ENCODE measurements at regions of chr18 and their contacts with region 1.

Region 1: DNA sequence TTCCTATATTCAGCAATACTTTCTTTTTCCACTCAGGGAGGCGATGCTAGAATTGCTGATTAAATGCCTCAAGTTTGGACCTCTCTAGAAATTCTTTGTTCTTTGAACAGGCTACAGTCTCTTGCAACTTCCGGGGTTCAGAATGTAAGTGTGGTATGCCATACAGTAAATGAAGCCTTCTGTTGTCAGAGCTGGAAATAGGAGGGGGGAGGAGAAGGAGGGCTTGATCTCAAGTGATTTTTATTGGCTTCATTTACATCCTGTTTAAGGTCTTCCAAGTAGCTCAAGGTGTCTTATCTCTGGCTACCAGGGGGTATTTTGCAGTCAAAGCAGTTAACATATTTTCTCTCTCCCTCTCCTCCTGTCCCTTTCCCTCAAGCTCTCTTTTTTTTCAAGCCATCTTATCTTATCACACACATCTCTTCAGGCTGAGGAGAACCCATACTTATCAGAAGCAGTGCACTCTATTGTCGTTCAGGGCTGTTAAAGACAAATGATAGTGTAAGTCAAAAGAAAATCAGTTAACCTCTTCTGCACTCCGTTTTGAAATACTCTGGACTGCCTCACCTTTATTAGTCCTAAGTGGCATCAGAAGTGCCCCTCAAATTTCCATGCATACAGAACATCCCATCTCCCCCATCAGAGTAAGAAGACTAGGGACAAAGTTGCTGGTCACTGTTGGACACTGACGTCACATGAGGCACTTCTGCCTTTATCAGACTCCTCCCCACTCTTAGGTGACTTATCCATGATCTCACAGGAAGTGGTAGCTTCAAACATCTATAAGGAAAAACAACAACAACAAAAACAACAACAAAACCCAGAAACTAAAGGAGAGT is 112.2 kb downstream of the ZNF521 start:
- DNase-seq: no peak
- ATAC-seq: peak; percentile 39
- H3K4me3 Mint-ChIP-seq: no peak overlapping the region
- H3K27ac Mint-ChIP-seq: no peak overlapping the region
- H3K4me1 Mint-ChIP-seq: no peaks in the 10 kb centered on the region
- H3K27me3 Mint-ChIP-seq: no peaks in the 10 kb centered on the region

Region 2: DNA sequence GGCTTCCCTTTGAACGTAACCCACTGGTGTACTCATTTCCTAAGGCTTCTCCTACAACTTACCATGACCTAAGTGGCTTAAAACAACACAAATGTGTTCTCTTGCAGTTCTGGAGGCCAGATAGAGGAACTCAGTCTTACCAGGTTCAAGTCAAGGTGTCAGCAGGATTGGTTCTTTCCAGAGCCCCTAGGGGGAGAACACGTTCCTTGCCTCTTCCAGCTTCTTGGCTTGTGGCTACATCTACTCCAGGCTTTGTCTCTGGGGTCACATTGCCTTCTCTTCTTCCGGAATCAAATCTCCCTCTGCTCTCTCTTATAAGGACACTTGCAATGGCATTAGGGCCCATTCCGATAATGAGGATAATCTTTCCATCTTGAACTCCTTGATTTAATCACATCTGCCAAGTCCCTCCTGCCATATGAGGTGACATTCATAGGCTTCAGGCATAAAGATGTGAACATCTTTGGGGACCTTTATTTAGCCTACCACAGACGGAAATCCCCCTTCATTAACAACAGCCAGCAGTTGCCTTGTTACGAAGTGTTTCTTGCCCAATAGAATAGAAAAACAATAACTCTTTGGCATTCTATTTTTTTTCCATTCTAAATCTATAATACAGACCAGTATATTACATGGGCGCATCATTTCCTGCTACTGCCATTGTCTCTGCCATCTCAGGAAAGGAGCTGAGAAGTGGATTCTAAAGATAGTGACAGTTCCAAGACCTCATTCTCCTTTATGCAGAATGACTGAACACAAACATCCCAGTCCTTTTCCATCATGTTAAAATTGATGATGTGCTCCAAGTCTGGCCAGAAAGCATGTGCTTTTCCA is 249.8 kb before region 1 on chr18:
- CTCF ChIA-PET with region 1: no interaction called
- POLR2A ChIA-PET with region 1: no interaction called
- intact Hi-C with region 1: no loop called
- DNase-seq: no peak
- ATAC-seq: no peak
- H3K4me3 Mint-ChIP-seq: no peak overlapping the region
- H3K27ac Mint-ChIP-seq: no peak overlapping the region
- H3K4me1 Mint-ChIP-seq: no peaks in the 10 kb centered on the region
- H3K27me3 Mint-ChIP-seq: peaks cover 2% of the 10 kb centered on the region

Region 3: DNA sequence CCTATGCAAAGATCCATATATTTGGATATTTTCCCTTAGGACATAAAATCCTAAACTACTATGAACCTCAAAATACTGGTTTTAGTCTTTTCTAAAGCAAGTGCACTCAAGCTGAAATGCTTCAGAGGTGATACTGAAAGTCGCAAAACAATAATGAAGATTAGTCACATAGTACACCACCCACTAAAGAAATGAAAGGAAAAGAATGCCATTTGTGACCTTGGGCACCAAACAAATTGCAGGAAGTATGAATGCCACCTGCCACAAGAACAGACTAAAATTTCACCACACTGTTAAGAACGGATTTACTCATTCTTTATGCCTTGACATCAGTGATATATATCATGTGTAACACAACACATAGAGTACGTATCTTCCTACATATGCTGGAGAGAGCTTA is 49.3 kb before region 1 on chr18:
- CTCF ChIA-PET with region 1: no interaction called
- POLR2A ChIA-PET with region 1: no interaction called
- intact Hi-C with region 1: loop called in 1 of 2 experiments (anchors 5 kb)
- DNase-seq: no peak
- ATAC-seq: no peak
- H3K4me3 Mint-ChIP-seq: no peak overlapping the region
- H3K27ac Mint-ChIP-seq: no peak overlapping the region
- H3K4me1 Mint-ChIP-seq: no peaks in the 10 kb centered on the region
- H3K27me3 Mint-ChIP-seq: no peaks in the 10 kb centered on the region

Region 4: DNA sequence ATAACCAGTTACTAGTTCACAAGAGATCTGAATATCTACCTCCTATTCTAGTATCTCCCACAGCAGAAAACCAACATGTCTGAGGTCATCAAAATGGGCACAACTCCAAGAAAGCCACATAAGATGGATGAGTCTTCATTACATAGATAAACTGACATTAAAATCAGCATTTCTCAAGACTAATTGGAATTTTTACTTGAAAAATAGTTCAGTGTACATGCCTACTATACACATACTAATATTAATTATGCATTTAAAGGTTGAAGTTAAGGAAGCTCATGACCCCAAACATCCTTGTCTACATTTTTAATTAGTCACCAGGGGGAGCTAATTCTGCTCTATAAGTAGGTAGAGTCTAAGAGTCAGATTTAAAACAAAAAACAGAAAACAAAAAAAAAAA is 70.2 kb after region 1 on chr18:
- CTCF ChIA-PET with region 1: no interaction called
- POLR2A ChIA-PET with region 1: no interaction called
- intact Hi-C with region 1: no loop called
- DNase-seq: no peak
- ATAC-seq: no peak
- H3K4me3 Mint-ChIP-seq: no peak overlapping the region
- H3K27ac Mint-ChIP-seq: no peak overlapping the region
- H3K4me1 Mint-ChIP-seq: no peaks in the 10 kb centered on the region
- H3K27me3 Mint-ChIP-seq: peaks cover 4% of the 10 kb centered on the region